ENCODE measurements at regions of chr7 and their contacts with region 1.

Region 1: DNA sequence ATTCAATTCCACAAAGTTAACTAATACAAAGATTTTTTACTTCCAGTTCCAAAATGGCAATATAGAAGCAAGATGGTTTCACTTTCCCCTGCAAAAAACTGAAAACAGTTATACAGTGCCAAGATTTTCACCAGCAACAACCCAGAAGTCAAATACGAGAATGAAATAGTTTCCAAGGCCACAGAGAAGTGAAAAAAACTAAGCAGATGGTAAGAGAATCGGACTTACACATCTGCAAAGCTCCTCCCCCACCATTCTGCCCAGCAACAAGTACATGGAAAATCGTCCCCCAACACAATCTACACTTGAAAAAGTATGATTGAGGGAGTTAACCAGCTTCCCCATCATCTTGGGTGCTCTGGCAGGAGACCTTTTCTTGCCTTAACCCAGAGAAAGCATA is 30.3 kb upstream of the KEL start:
- DNase-seq: no peak
- ATAC-seq: no peak
- H3K4me3 ChIP-seq: no peak overlapping the region
- H3K27ac ChIP-seq: no peak overlapping the region
- H3K4me1 ChIP-seq: no peaks in the 10 kb centered on the region
- H3K27me3 ChIP-seq: no peaks in the 10 kb centered on the region
- CTCF ChIP-seq: no peak

Region 2: GRCh38 chr7:142880876-142881505 is 111.5 kb before region 1 on chr7:
- intact Hi-C with region 1: loop called in 1 of 10 experiments (anchors 10 kb)
- DNase-seq: no peak
- ATAC-seq: no peak
- H3K4me3 ChIP-seq: no peak overlapping the region
- H3K27ac ChIP-seq: no peak overlapping the region
- H3K4me1 ChIP-seq: no peaks in the 10 kb centered on the region
- H3K27me3 ChIP-seq: peaks cover 0 to 61% (median 35%) of the 10 kb centered on the region in 7 donors
- CTCF ChIP-seq: peak in 8 of 9 donors; percentile 33 to 82 (median 52)